ENCODE measurements at regions of chr1 and their contacts with region 1.

Region 1: DNA sequence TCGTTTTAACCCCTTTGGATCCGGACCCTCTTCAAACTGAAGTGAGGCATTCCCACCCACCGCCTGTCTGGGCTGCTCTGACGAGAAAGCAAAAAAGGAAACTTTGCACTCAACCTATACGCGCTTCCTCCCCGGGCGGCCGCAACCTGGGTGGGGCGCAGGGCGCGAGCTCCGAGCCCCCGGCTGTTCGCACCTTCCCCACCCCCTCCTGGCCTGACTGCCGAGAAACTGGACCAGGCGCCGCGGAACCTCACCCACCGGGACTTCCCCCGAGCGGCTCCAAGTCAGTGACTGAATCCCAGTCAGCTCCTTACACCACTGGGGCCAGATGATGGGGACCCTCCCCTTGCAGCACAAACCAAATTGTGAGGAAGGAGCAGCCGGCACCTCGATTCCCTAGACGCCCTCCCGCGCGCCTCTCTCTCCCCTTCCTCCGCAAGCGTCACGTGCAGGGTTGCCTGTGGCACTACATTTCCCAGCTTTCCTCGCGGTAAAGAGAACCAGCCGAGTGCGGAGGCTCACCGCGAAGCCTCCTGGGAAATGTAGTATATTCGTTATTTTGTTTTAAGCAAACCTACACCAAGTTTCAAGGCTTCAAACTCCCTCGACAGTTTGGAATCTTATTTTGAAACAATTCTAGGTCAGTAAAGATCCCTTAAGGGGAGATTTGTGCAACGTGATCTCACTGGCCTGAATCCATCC is at the start of gene RAB29:
- DNase-seq: peak; percentile 79
- ATAC-seq: peak; percentile 76
- H3K4me3 Mint-ChIP-seq: peak within 1 kb of the TSS; percentile 93
- H3K27ac Mint-ChIP-seq: peak within 1 kb of the TSS; percentile 98
- H3K4me1 Mint-ChIP-seq: peaks cover 66% of the 10 kb centered on the region
- H3K27me3 Mint-ChIP-seq: no peaks in the 10 kb centered on the region
- CTCF ChIP-seq: no peak
- total RNA-seq, gene RAB29: 149 and 156 TPM in 2 replicates

Region 2: GRCh38 chr1:205668951-205669340 is 106.2 kb before region 1 on chr1:
- CTCF ChIA-PET with region 1: interaction called, 7 read pairs
- POLR2A ChIA-PET with region 1: interaction called, 62 read pairs
- intact Hi-C with region 1: loop called (anchors 2 kb)
- DNase-seq: no peak
- ATAC-seq: peak; percentile 68
- H3K4me3 Mint-ChIP-seq: peak overlapping the region; percentile 80
- H3K27ac Mint-ChIP-seq: peak overlapping the region; percentile 93
- H3K4me1 Mint-ChIP-seq: peaks cover 87% of the 10 kb centered on the region
- H3K27me3 Mint-ChIP-seq: no peaks in the 10 kb centered on the region
- CTCF ChIP-seq: no peak

Region 3: DNA sequence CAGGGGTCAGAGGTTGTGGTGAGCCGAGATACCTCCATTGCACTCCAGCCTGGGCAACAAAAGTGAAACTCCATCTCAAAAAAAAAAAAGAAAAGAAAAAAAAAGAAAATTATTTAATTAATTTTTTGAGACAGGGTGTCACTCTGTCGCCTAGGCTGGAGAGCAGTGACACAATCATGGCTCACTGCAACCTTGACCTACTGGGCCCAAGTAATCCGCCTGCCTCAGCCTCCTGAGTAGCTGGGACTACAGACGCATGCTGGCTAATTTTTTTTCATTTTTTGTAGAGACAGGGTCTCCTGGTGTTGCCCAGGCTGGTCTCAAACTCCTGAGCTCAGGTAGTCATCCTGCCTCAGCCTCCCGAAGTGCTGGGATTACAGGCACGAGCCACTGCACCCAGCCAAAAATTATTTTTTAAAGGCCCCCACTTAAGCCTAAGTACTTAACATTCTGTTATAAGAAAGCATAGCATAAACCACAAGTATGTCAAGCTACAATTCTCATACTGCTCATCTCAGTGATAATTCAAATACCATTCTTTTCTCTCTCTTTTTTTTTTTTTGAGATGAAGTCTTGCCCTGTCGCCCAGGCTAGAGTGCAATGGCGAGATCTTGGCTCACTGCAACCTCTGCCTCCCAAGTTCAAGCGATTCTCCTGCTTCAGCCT is 45.1 kb before region 1 on chr1:
- CTCF ChIA-PET with region 1: no interaction called
- POLR2A ChIA-PET with region 1: interaction called, 6 read pairs
- intact Hi-C with region 1: loop called (anchors 10 kb)
- DNase-seq: no peak
- ATAC-seq: no peak
- H3K4me3 Mint-ChIP-seq: no peak overlapping the region
- H3K27ac Mint-ChIP-seq: no peak overlapping the region
- H3K4me1 Mint-ChIP-seq: peaks cover 7% of the 10 kb centered on the region
- H3K27me3 Mint-ChIP-seq: no peaks in the 10 kb centered on the region
- CTCF ChIP-seq: no peak

Region 4: DNA sequence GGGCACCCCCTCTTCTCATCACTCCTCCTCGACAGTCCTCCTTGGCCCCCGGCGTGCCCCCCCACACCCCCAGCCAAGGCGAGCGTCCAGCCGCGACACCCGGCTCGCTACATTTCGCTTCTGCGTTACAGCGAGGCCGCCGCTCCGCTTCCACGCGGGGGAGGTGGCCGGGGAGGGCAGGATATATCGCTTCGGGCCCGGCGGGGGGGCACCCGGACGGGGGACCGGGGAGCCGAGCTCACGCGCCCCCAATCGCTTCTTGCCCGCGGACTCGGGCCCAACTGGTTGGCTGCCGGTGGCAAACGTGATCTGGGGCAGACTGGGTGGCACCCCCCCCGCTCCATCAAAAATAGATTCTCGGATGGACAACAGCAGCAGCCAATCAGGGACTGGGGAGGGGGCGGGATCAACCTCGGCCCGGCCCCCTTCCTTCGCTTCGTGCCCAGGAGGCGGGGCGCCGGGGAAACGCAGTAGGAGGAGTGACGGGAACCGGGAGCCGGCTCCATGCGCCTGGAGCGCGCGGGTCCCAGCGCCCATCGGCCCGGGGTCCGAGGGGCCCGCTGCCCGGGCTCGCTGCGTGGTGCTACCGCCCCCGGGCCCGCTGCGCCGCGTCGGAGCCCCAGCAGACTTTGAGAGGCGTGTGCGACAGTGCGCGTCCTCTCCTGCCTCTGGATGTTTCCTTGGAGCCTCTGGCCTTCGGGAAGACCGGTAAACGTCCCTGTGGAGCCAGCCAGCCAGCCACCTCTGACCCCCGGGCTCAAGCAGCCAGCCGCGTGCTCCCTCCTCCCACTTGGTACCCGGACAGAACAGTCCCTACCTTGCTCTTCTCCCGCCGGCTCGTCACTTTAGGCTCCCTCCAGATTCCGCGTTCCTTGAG is 38.0 kb after region 1 on chr1 and contains the start of gene SLC41A1:
- CTCF ChIA-PET with region 1: no interaction called
- POLR2A ChIA-PET with region 1: interaction called, 40 read pairs
- intact Hi-C with region 1: loop called (anchors 1 kb)
- DNase-seq: peak; percentile 78
- ATAC-seq: peak; percentile 96
- H3K4me3 Mint-ChIP-seq: peak within 1 kb of the TSS; percentile 95
- H3K27ac Mint-ChIP-seq: peak within 1 kb of the TSS; percentile 83
- H3K4me1 Mint-ChIP-seq: peaks cover 52% of the 10 kb centered on the region
- H3K27me3 Mint-ChIP-seq: no peaks in the 10 kb centered on the region
- CTCF ChIP-seq: no peak
- total RNA-seq, gene SLC41A1: 31.2 and 32.4 TPM in 2 replicates

Region 5: GRCh38 chr1:205977402-205978014 is 202.3 kb after region 1 on chr1:
- CTCF ChIA-PET with region 1: interaction called, 12 read pairs
- POLR2A ChIA-PET with region 1: interaction called, 10 read pairs
- intact Hi-C with region 1: no loop called
- DNase-seq: peak; percentile 65
- ATAC-seq: peak; percentile 95
- H3K4me3 Mint-ChIP-seq: no peak overlapping the region
- H3K27ac Mint-ChIP-seq: no peak overlapping the region
- H3K4me1 Mint-ChIP-seq: no peaks in the 10 kb centered on the region
- H3K27me3 Mint-ChIP-seq: peaks cover 2% of the 10 kb centered on the region
- CTCF ChIP-seq: peak; percentile 83

Region 6: DNA sequence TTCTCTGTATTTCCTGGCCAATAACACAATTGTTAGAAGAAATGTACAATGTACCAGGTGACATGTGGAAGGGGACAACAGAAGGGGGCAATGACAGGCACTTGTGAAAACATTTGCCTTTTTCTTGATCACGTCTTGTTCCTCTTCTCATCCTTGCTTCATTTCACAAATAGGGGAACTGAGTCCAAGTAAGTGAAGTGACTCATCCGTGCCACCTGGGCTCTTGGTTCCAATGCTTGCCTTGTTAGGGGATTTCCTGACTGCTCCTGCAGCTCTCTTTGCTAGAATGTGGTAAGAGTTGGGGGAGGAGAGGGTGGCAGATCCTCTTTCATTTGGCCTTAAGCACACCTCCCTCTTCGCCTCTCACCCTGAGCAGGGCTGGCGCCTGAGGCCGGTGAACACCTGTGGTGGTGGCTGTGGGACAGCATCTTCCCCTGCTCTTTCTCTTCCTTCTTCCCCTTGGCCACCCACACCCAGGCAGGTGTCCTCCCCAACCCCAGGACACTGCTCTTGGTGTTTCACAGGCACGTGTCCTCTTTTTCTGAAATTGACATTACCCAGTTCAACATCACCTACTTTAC is 275.6 kb after region 1 on chr1:
- CTCF ChIA-PET with region 1: no interaction called
- POLR2A ChIA-PET with region 1: interaction called, 26 read pairs
- intact Hi-C with region 1: loop called (anchors 2 kb)
- DNase-seq: peak; percentile 71
- ATAC-seq: peak; percentile 86
- H3K4me3 Mint-ChIP-seq: peak overlapping the region; percentile 58
- H3K27ac Mint-ChIP-seq: peak overlapping the region; percentile 95
- H3K4me1 Mint-ChIP-seq: peaks cover 94% of the 10 kb centered on the region
- H3K27me3 Mint-ChIP-seq: no peaks in the 10 kb centered on the region
- CTCF ChIP-seq: no peak

Measured in activated B cell treated with CpG ODN at 0.5 μM for 24 hours (primary cell).